B cell (primary cell): ENCODE measurements at regions of chr7 and their contacts with region 1.

Region 1: GRCh38 chr7:20310963-20311742 is 19.5 kb upstream of the ITGB8 start:
- DNase-seq: peak; percentile 72
- ATAC-seq: peak; percentile 45
- H3K4me3 ChIP-seq: no peak overlapping the region
- H3K4me3 Mint-ChIP-seq: no peak overlapping the region
- H3K27ac ChIP-seq: no peak overlapping the region
- H3K27ac Mint-ChIP-seq: no peak overlapping the region
- H3K4me1 ChIP-seq: peaks cover 0 to 3% of the 10 kb centered on the region in 2 donors
- H3K4me1 Mint-ChIP-seq: peaks cover 13% of the 10 kb centered on the region
- H3K27me3 ChIP-seq: no peaks in the 10 kb centered on the region
- H3K27me3 Mint-ChIP-seq: no peaks in the 10 kb centered on the region
- CTCF ChIP-seq: peak; percentile 79

Region 2: DNA sequence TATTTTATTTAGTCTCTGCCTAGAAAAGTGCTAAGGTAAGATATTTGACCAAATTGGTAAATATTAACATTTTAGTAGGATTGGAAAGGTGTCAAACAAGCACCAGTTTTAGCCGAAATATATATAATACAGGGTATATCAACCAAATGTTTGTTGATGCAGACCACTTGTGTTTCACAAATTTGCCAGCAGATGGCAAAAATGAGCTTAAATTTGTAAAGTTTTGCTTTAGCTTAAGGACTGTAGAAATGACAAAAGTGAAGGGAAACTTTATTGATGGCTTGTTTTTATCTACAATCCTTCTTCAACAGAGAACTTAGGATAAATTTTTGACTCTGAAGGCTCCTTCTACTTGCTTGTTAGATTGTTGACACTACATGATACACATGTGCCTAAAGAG is 597.5 kb before region 1 on chr7:
- CTCF ChIA-PET with region 1: interaction called, 25 read pairs
- POLR2A ChIA-PET with region 1: no interaction called
- intact Hi-C with region 1: loop called (anchors 2 kb)
- DNase-seq: peak; percentile 69
- ATAC-seq: no peak
- H3K4me3 ChIP-seq: no peak overlapping the region
- H3K4me3 Mint-ChIP-seq: no peak overlapping the region
- H3K27ac ChIP-seq: no peak overlapping the region
- H3K27ac Mint-ChIP-seq: no peak overlapping the region
- H3K4me1 ChIP-seq: peaks cover 6 to 7% of the 10 kb centered on the region in 2 donors
- H3K4me1 Mint-ChIP-seq: peaks cover 14% of the 10 kb centered on the region
- H3K27me3 ChIP-seq: no peaks in the 10 kb centered on the region
- H3K27me3 Mint-ChIP-seq: peaks cover 15% of the 10 kb centered on the region
- CTCF ChIP-seq: peak; percentile 79

Region 3: GRCh38 chr7:19754521-19755116 is 556.5 kb before region 1 on chr7:
- CTCF ChIA-PET with region 1: interaction called, 56 read pairs
- POLR2A ChIA-PET with region 1: no interaction called
- intact Hi-C with region 1: loop called (anchors 1 kb)
- DNase-seq: peak; percentile 58
- ATAC-seq: no peak
- H3K4me3 ChIP-seq: no peak overlapping the region
- H3K4me3 Mint-ChIP-seq: no peak overlapping the region
- H3K27ac ChIP-seq: no peak overlapping the region
- H3K27ac Mint-ChIP-seq: no peak overlapping the region
- H3K4me1 ChIP-seq: no peaks in the 10 kb centered on the region
- H3K4me1 Mint-ChIP-seq: no peaks in the 10 kb centered on the region
- H3K27me3 ChIP-seq: no peaks in the 10 kb centered on the region
- H3K27me3 Mint-ChIP-seq: peaks cover 6% of the 10 kb centered on the region
- CTCF ChIP-seq: peak; percentile 94

Region 4: GRCh38 chr7:20114468-20114867 is 196.7 kb before region 1 on chr7:
- CTCF ChIA-PET with region 1: interaction called, 5 read pairs
- POLR2A ChIA-PET with region 1: no interaction called
- intact Hi-C with region 1: loop called (anchors 5 kb)
- DNase-seq: peak; percentile 85
- ATAC-seq: peak; percentile 91
- H3K4me3 ChIP-seq: no peak overlapping the region
- H3K4me3 Mint-ChIP-seq: peak overlapping the region; percentile 60
- H3K27ac ChIP-seq: peak overlapping the region in 1 of 2 donors; percentile 62
- H3K27ac Mint-ChIP-seq: peak overlapping the region; percentile 69
- H3K4me1 ChIP-seq: peaks cover 19 to 23% of the 10 kb centered on the region in 2 donors
- H3K4me1 Mint-ChIP-seq: peaks cover 23% of the 10 kb centered on the region
- H3K27me3 ChIP-seq: no peaks in the 10 kb centered on the region
- H3K27me3 Mint-ChIP-seq: no peaks in the 10 kb centered on the region
- CTCF ChIP-seq: peak; percentile 27

Region 5: DNA sequence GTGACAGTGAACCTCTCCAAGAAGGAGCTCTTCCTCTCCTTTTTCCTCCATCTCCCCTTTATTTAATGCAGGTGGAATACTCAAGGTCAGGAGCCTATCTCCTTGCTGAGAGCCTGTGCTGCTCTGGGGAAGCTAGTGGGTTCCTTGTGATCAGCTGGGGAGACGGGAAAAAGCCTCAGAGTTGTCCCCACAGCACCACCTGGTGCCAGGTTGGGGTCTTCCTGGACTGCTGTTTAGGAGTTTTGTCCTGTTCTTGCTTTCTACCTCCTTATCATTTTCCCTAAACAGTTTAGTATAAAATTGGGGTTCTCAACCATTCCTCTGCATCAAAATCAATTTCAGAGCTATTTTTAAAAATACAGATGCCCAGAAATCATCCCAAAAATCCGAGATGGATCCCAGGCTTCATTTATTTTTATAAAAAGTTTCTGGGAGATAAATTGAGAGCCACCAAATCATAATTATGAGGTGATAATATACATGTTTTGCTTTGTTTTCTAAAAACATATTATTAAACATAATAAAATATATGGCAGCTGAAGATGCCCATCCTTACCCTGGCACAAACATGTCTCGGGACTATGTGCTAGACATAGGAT is 138.3 kb before region 1 on chr7:
- CTCF ChIA-PET with region 1: interaction called, 19 read pairs
- POLR2A ChIA-PET with region 1: no interaction called
- intact Hi-C with region 1: no loop called
- DNase-seq: peak; percentile 54
- ATAC-seq: peak; percentile 60
- H3K4me3 ChIP-seq: no peak overlapping the region
- H3K4me3 Mint-ChIP-seq: no peak overlapping the region
- H3K27ac ChIP-seq: no peak overlapping the region
- H3K27ac Mint-ChIP-seq: no peak overlapping the region
- H3K4me1 ChIP-seq: peaks cover 0 to 3% of the 10 kb centered on the region in 2 donors
- H3K4me1 Mint-ChIP-seq: no peaks in the 10 kb centered on the region
- H3K27me3 ChIP-seq: no peaks in the 10 kb centered on the region
- H3K27me3 Mint-ChIP-seq: no peaks in the 10 kb centered on the region
- CTCF ChIP-seq: peak; percentile 43

Region 6: GRCh38 chr7:20299647-20300312 is 11.4 kb before region 1 on chr7:
- CTCF ChIA-PET with region 1: interaction called, 18 read pairs
- POLR2A ChIA-PET with region 1: no interaction called
- intact Hi-C with region 1: no loop called
- DNase-seq: no peak
- ATAC-seq: no peak
- H3K4me3 ChIP-seq: no peak overlapping the region
- H3K4me3 Mint-ChIP-seq: peak overlapping the region; percentile 9
- H3K27ac ChIP-seq: no peak overlapping the region
- H3K27ac Mint-ChIP-seq: no peak overlapping the region
- H3K4me1 ChIP-seq: peaks cover 0 to 5% of the 10 kb centered on the region in 2 donors
- H3K4me1 Mint-ChIP-seq: peaks cover 16% of the 10 kb centered on the region
- H3K27me3 ChIP-seq: no peaks in the 10 kb centered on the region
- H3K27me3 Mint-ChIP-seq: no peaks in the 10 kb centered on the region
- CTCF ChIP-seq: no peak

Region 7: DNA sequence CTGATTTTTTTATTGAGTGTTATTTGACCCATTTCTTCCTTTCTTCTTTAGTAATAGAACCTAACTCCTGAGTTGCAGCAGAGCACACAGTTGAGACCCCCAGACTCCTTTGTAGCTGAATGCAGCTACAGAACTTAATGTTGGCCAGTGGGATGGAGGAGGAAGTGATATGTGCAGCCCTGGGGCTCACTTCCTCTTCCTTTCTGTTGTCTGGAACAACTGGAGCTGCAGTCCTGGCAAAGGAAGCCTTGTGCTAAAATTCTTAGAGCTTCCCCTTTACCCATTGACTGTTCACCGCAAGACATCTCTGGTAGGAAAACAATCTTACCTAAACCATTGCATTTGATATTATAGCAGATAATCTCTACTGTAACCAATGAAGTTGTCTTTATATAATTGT is 106.1 kb after region 1 on chr7:
- CTCF ChIA-PET with region 1: no interaction called
- POLR2A ChIA-PET with region 1: no interaction called
- intact Hi-C with region 1: no loop called
- DNase-seq: no peak
- ATAC-seq: no peak
- H3K4me3 ChIP-seq: no peak overlapping the region
- H3K4me3 Mint-ChIP-seq: no peak overlapping the region
- H3K27ac ChIP-seq: no peak overlapping the region
- H3K27ac Mint-ChIP-seq: no peak overlapping the region
- H3K4me1 ChIP-seq: no peaks in the 10 kb centered on the region
- H3K4me1 Mint-ChIP-seq: no peaks in the 10 kb centered on the region
- H3K27me3 ChIP-seq: no peaks in the 10 kb centered on the region
- H3K27me3 Mint-ChIP-seq: no peaks in the 10 kb centered on the region
- CTCF ChIP-seq: no peak

Region 8: GRCh38 chr7:20684581-20684980 is 373.4 kb after region 1 on chr7:
- CTCF ChIA-PET with region 1: no interaction called
- POLR2A ChIA-PET with region 1: no interaction called
- intact Hi-C with region 1: no loop called
- DNase-seq: no peak
- ATAC-seq: no peak
- H3K4me3 ChIP-seq: no peak overlapping the region
- H3K4me3 Mint-ChIP-seq: no peak overlapping the region
- H3K27ac ChIP-seq: no peak overlapping the region
- H3K27ac Mint-ChIP-seq: no peak overlapping the region
- H3K4me1 ChIP-seq: no peaks in the 10 kb centered on the region
- H3K4me1 Mint-ChIP-seq: no peaks in the 10 kb centered on the region
- H3K27me3 ChIP-seq: peaks cover 0 to 2% (median 0%) of the 10 kb centered on the region in 4 experiments
- H3K27me3 Mint-ChIP-seq: peaks cover 6% of the 10 kb centered on the region
- CTCF ChIP-seq: no peak